ENCODE measurements at regions of chr7 and their contacts with region 1.

Region 1: DNA sequence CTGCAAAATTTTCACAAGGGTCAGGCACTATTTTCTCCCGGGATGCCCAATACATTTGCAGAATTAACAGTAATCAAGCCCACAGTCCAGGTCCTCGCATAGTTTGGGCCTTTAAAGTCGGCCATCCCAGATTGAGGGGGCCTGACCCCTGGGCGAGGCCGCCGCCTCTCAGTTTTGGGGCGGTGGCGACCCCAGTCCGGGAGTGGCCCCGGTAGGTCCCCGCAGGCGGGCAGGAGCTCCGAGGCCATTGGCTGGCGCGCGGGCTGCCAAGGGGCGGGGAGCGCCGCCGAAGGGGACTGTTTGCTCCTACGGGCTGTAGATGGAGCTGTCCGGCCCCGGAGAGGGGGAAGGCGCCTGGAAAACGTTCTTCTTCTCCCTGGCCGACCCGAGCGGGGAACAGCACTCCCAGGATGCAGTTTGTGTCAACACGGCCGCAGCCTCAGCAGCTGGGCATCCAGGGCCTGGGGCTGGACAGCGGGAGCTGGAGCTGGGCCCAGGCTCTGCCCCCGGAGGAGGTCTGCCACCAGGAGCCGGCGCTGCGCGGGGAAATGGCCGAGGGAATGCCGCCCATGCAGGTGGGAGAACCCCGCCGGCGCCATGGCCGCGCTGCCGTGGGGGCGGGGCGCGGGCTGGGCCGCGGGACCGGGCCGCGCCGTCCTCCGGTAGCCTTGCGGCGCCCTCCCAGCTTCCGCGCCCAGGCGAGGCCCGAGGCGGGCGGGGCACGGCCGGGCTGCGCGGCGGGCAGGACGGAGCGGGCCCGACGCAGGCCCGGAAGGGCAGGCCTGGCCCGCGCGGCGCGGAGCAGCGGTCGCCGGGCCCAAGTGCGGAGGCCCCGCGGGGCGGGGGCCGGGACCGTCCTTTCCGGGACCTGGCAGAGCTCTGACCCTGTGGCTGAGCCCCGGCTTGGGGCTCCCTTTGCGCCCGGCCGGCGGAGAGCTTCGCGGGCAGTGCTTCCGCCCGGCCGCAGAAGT is at the start of gene ZNF282:
- DNase-seq: peak; percentile 94
- H3K4me3 Mint-ChIP-seq: peak within 1 kb of the TSS; percentile 87
- H3K27ac Mint-ChIP-seq: peak within 1 kb of the TSS; percentile 67
- H3K4me1 Mint-ChIP-seq: peaks cover 15% of the 10 kb centered on the region
- H3K27me3 Mint-ChIP-seq: no peaks in the 10 kb centered on the region
- CTCF ChIP-seq: peak; percentile 39
- total RNA-seq, gene ZNF282: 40.3 and 45.2 TPM in 2 replicates

Region 2: DNA sequence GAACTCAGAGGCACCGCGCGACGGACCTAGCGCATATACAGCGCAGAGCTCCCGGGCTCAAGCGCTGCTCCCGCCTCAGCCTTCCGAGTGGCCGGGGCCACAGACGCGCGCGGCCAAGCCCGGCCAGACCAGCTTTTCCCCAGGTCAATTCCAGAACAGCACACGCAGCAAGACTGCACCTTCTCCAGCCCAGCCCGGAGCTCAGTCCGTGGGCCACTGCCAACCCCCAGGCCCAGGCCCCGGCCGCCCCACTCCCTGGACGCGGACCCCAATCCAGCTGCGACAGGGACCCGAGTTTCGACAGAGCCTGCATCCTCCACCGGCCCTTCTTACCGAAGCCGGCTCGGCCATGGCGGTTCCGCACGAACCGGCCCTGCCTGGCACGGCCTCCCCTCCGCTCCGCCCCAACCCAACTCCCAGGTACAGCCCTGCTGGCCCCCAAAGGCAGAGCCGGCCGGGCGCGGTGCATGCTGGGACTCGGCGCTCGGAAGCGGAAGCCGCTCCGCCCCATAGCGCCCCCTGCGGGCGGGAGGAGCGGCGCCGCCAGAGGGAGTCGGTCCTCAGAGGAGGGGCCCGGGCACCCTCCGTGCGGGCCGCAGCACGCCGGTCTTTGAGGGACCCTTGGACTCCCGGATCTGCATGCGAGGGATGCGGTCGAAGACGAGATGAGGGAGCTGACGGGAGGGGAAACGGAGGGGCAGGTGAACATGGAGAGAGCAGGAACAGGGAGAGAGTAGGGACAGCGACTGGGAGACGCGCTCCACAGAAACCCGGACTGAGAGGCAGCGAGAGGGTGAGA is 69.4 kb before region 1 on chr7 and contains the start of gene ZNF425:
- CTCF ChIA-PET with region 1: interaction called, 4 read pairs
- intact Hi-C with region 1: loop called (anchors 5 kb)
- DNase-seq: peak; percentile 96
- H3K4me3 Mint-ChIP-seq: peak within 1 kb of the TSS; percentile 82
- H3K27ac Mint-ChIP-seq: peak within 1 kb of the TSS; percentile 77
- H3K4me1 Mint-ChIP-seq: peaks cover 18% of the 10 kb centered on the region
- H3K27me3 Mint-ChIP-seq: no peaks in the 10 kb centered on the region
- CTCF ChIP-seq: peak; percentile 91
- total RNA-seq, gene ZNF425: 1.0 and 1.5 TPM in 2 replicates

Region 3: GRCh38 chr7:149239345-149240191 is 44.1 kb after region 1 on chr7 and contains the start of gene ZNF212:
- CTCF ChIA-PET with region 1: interaction called, 5 read pairs
- intact Hi-C with region 1: loop called (anchors 2 kb)
- DNase-seq: peak; percentile 97
- H3K4me3 Mint-ChIP-seq: peak within 1 kb of the TSS; percentile 90
- H3K27ac Mint-ChIP-seq: peak within 1 kb of the TSS; percentile 97
- H3K4me1 Mint-ChIP-seq: peaks cover 28% of the 10 kb centered on the region
- H3K27me3 Mint-ChIP-seq: no peaks in the 10 kb centered on the region
- CTCF ChIP-seq: peak; percentile 68
- total RNA-seq, gene ZNF212: 17.2 and 18.5 TPM in 2 replicates

Region 4: GRCh38 chr7:149261829-149262617 is 66.6 kb after region 1 on chr7 and contains the start of gene ZNF783:
- CTCF ChIA-PET with region 1: interaction called, 11 read pairs
- intact Hi-C with region 1: no loop called
- DNase-seq: peak; percentile 83
- H3K4me3 Mint-ChIP-seq: peak within 1 kb of the TSS; percentile 86
- H3K27ac Mint-ChIP-seq: peak within 1 kb of the TSS; percentile 36
- H3K4me1 Mint-ChIP-seq: peaks cover 8% of the 10 kb centered on the region
- H3K27me3 Mint-ChIP-seq: no peaks in the 10 kb centered on the region
- CTCF ChIP-seq: peak; percentile 89
- total RNA-seq, gene ZNF783: 17.8 and 18.1 TPM in 2 replicates

Region 5: DNA sequence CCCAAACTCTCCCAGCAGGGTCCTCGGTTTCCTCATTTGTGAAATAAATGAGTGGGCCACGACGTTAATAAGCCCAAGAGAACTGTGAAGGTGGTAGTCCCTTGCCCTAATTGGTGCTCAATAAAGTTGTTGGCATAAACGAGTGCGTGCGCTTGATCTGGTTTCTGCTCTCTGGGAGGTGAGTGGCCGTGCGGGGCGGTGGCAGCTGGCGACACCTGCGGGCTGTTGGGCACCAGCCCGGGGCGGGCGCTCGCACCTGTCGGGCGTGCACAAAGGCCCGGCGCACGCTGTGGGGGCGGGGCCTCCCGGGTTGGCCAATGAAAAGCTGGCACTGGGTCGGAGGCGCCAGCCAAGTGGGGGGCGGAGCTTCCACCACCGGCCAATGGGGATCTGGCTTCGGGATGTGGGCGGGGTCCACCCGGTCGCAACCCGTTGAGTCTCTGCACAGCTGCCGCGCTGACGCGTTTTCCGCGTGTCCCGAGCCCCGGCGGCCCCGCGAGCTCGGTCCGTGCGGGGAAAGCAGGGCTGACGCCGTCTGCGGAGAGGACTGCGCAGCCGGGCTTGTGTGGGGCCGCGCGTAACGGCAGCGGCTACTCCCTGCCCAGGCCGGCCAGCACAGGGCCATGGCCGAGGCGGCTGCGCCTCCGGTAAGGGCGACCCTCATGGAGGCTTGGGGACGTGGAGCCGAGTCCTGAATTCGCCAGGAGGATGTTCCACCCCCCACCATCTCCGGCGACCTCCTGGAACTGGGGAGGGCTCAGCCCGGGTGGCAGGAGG is 89.6 kb after region 1 on chr7:
- CTCF ChIA-PET with region 1: interaction called, 14 read pairs
- intact Hi-C with region 1: no loop called
- DNase-seq: peak; percentile 99
- H3K4me3 Mint-ChIP-seq: peak overlapping the region; percentile 92
- H3K27ac Mint-ChIP-seq: peak overlapping the region; percentile 84
- H3K4me1 Mint-ChIP-seq: peaks cover 13% of the 10 kb centered on the region
- H3K27me3 Mint-ChIP-seq: no peaks in the 10 kb centered on the region
- CTCF ChIP-seq: no peak

Measured in Calu3 (cell line).